Kidney (tissue), 22 donors: ENCODE measurements at regions of chr20 and their contacts with region 1.

Region 1: GRCh38 chr20:33299111-33299603 is 16.1 kb downstream of the BPIFB1 start:
- DNase-seq: peak; percentile 53 to 83 (median 64)
- H3K4me3 ChIP-seq: no peak overlapping the region
- H3K27ac ChIP-seq: no peak overlapping the region
- H3K4me1 ChIP-seq: peaks cover 0 to 2% (median 0%) of the 10 kb centered on the region in 3 donors
- H3K27me3 ChIP-seq: no peaks in the 10 kb centered on the region
- CTCF ChIP-seq: peak; percentile 87

Region 2: GRCh38 chr20:32902456-32903420 is 396.4 kb before region 1 on chr20:
- intact Hi-C with region 1: loop called (anchors 10 kb)
- DNase-seq: peak in 3 of 5 donors; percentile 33 to 77 (median 48)
- H3K4me3 ChIP-seq: no peak overlapping the region
- H3K27ac ChIP-seq: no peak overlapping the region
- H3K4me1 ChIP-seq: no peaks in the 10 kb centered on the region
- H3K27me3 ChIP-seq: no peaks in the 10 kb centered on the region
- CTCF ChIP-seq: peak; percentile 89

Region 3: GRCh38 chr20:33076662-33077372 is 222.3 kb before region 1 on chr20:
- intact Hi-C with region 1: no loop called
- DNase-seq: peak in 1 of 5 donors; percentile 41
- H3K4me3 ChIP-seq: no peak overlapping the region
- H3K27ac ChIP-seq: no peak overlapping the region
- H3K4me1 ChIP-seq: no peaks in the 10 kb centered on the region
- H3K27me3 ChIP-seq: no peaks in the 10 kb centered on the region
- CTCF ChIP-seq: no peak

Region 4: DNA sequence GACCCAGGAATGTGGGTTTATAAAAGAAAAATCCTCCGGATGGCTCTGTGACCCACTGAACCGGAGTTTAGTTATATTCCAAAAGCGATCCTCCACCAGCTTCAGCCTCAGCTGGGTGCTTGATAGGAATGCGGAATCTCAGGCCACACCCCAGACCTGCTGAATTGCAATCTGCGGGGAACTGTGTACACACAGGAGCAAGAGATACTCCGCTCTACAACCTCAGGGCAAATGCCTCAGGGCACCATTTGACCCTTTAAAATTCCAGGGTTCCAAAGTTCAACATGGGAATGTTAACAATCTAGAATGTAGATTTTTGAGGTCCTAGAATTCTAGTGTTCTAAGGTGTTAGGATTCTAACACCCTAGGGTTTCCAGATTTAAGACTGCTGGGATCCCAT is 120.4 kb before region 1 on chr20:
- intact Hi-C with region 1: no loop called
- DNase-seq: peak in 4 of 5 donors; percentile 24 to 59 (median 44)
- H3K4me3 ChIP-seq: no peak overlapping the region
- H3K27ac ChIP-seq: no peak overlapping the region
- H3K4me1 ChIP-seq: no peaks in the 10 kb centered on the region
- H3K27me3 ChIP-seq: no peaks in the 10 kb centered on the region
- CTCF ChIP-seq: no peak